Endothelial cell of umbilical vein (primary cell): ENCODE measurements at regions of chr1 and their contacts with region 1.

Region 1: DNA sequence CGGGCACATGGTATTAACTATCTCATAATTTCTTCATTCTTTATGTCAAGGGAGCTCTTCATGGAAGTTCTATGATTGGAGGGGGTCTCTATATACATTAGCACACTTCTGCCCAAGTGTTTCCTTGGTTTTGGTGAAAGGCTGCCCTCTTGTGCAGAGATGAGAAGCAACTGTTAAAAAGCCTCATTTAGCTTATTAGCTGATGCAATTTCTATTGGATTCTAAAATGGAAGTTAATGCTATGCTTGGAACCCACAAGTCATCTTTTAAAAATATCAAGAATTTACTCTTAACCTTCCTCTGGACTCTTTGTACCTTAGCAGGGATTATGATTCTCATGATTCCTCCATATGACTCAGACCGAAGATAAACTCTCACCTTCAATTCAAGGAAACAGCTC is 328.9 kb downstream of the PTBP2 start:
- DNase-seq: peak; percentile 62
- H3K4me3 ChIP-seq: no peak overlapping the region
- H3K27ac ChIP-seq: no peak overlapping the region
- H3K4me1 ChIP-seq: no peaks in the 10 kb centered on the region
- H3K27me3 ChIP-seq: no peaks in the 10 kb centered on the region
- CTCF ChIP-seq: peak; percentile 19 to 47
- POLR2A ChIP-seq: no peak

Region 2: GRCh38 chr1:96979304-96980268 is 70.9 kb before region 1 on chr1:
- CTCF ChIA-PET with region 1: interaction called, 18 read pairs
- POLR2A ChIA-PET with region 1: no interaction called
- dilution Hi-C with region 1: no loop called
- intact Hi-C with region 1: loop called (anchors 5 kb)
- DNase-seq: no peak
- H3K4me3 ChIP-seq: no peak overlapping the region
- H3K27ac ChIP-seq: no peak overlapping the region
- H3K4me1 ChIP-seq: peaks cover 16% of the 10 kb centered on the region
- H3K27me3 ChIP-seq: peaks cover 0 to 4% of the 10 kb centered on the region in 2 experiments
- CTCF ChIP-seq: no peak
- POLR2A ChIP-seq: no peak

Region 3: GRCh38 chr1:97063530-97063929 is 13.0 kb after region 1 on chr1:
- CTCF ChIA-PET with region 1: interaction called, 10 read pairs
- POLR2A ChIA-PET with region 1: no interaction called
- dilution Hi-C with region 1: no loop called
- intact Hi-C with region 1: no loop called
- DNase-seq: no peak
- H3K4me3 ChIP-seq: no peak overlapping the region
- H3K27ac ChIP-seq: no peak overlapping the region
- H3K4me1 ChIP-seq: no peaks in the 10 kb centered on the region
- H3K27me3 ChIP-seq: no peaks in the 10 kb centered on the region
- CTCF ChIP-seq: no peak
- POLR2A ChIP-seq: no peak

Region 4: GRCh38 chr1:97308131-97308530 is 257.6 kb after region 1 on chr1:
- CTCF ChIA-PET with region 1: no interaction called
- POLR2A ChIA-PET with region 1: no interaction called
- dilution Hi-C with region 1: no loop called
- intact Hi-C with region 1: no loop called
- DNase-seq: no peak
- H3K4me3 ChIP-seq: no peak overlapping the region
- H3K27ac ChIP-seq: no peak overlapping the region
- H3K4me1 ChIP-seq: no peaks in the 10 kb centered on the region
- H3K27me3 ChIP-seq: no peaks in the 10 kb centered on the region
- CTCF ChIP-seq: no peak
- POLR2A ChIP-seq: no peak